ENCODE measurements at regions of chr3 and their contacts with region 1.

Region 1: DNA sequence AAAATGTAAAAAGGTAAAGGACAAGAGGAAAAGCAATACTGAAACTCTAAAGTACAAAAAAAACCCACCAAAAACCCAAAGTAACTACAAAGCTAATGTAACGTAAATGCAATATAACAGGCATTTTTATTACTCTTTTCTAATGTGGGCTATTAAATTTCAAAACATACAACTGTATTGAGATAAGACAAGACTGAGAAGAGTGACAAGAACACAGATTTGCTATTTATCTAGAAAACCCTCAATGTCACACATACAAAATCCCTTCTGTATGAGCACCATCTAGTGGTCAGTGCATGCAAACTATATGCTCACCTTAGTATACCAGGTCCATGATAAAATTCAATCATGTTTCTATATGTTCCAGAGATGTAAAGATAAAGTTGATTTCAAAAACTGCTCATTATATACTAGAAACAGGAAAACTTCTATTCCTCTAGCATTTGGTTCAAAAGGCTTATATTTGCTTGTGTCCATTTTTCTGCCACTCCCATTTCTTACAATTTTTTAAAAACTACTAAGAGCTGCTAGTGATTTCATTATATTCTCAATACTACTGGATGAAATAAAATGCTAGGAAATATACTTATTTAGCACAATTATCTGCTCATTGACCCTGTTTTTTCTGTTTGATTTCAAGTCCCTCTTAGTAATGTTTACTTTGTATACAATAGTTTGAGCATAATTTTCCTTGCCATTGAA is 111.4 kb downstream of the DLG1 start:
- DNase-seq: peak in 2 of 10 donors; percentile 19 to 40
- H3K4me3 ChIP-seq: no peak overlapping the region
- H3K27ac ChIP-seq: peak overlapping the region in 19 of 59 donors; percentile 0 to 81 (median 25)
- H3K27me3 ChIP-seq: no peaks in the 10 kb centered on the region
- CTCF ChIP-seq: peak; percentile 70 to 97 (median 90)

Region 2: DNA sequence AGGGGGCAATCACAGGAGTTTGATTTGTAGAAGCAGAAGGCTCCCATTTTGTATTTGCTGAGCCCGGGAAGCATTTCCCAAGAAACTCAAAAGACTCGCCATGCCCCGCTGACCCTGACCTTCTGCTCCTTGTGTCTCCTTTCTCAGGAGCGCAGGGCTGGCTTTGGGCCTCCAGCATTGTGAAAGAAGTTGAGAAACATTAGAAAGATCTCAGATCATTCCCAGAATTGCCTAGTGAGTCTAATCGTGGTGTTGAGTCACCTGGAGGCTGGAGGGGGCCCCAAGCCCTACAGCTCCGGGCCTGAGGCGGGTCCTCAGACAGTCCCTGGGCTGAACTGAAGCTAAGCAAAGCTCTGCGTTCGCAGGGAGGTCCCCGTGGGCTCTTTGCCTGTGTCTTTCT is 207.5 kb before region 1 on chr3:
- intact Hi-C with region 1: loop called in 1 of 2 experiments (anchors 5 kb)
- DNase-seq: no peak
- H3K4me3 ChIP-seq: no peak overlapping the region
- H3K27ac ChIP-seq: no peak overlapping the region
- H3K27me3 ChIP-seq: no peaks in the 10 kb centered on the region
- CTCF ChIP-seq: no peak

Region 3: DNA sequence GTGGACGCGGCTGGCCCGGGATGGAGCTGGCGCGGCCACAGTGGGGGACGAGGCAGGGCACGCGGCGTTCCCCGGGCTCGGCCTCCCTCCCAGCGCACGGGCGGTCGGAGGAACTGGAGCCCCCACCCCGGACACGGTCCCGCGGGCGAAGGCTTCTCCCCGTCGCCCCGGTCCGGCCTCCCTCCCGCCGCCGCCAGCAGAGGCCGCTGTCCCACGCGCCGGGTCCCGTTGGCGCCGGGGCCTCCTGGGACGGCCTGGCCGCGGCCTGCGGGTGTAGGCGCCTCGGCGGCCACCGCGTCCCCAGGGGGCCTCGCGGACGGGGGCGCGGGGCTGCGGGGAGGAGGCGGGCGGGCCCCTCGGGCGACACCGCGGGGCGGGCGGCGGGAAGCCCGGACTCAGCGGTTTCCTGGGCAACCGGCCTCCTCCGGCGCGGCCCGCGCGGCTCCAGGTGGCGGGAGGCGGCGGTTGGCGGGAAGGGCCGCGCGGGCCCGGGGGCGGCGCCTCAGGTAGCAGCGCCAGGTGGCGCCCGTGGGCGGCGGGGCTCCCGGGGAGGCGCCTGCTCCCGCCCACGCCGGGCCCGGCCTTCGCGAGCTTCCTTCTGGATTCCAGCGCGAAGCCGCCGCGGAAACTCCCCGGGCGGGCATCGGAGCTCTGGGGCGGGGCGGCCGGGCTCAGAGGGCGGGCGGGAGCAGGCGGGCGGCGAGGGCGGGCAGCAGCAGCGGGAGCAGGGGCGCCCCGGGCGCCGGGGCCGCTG is 184.2 kb before region 1 on chr3:
- intact Hi-C with region 1: loop called (anchors 2 to 5 kb)
- DNase-seq: peak in 8 of 10 donors; percentile 44 to 87 (median 69)
- H3K4me3 ChIP-seq: peak overlapping the region; percentile 39 to 87 (median 68)
- H3K27ac ChIP-seq: peak overlapping the region in 58 of 59 donors; percentile 45 to 93 (median 84)
- H3K27me3 ChIP-seq: no peaks in the 10 kb centered on the region
- CTCF ChIP-seq: peak; percentile 33 to 89 (median 69)

Region 4: DNA sequence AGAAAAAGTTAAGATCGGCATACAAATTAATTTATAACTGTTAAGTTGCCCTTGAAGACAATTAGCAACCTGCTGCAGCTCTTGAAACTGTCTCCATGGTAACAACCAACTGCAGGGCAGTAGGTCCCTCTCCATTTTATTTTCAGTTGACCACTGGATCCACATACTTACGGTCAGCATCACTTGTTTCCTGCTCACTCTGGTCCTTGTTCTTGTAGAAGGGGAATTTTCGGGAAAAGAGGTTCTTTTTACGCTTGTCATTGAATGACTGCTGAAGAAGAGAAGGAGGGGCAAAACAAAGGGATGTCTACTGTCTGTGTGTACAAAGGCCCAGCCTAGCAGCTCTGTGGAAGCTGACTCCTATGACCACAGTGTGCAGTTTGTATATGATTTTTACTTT is 110.6 kb before region 1 on chr3:
- intact Hi-C with region 1: loop called in 1 of 2 experiments (anchors 10 kb)
- DNase-seq: no peak
- H3K4me3 ChIP-seq: no peak overlapping the region
- H3K27ac ChIP-seq: peak overlapping the region in 19 of 59 donors; percentile 2 to 62 (median 25)
- H3K27me3 ChIP-seq: no peaks in the 10 kb centered on the region
- CTCF ChIP-seq: no peak

Region 5: GRCh38 chr3:197835509-197835908 is 648.5 kb after region 1 on chr3:
- intact Hi-C with region 1: no loop called
- DNase-seq: no peak
- H3K4me3 ChIP-seq: no peak overlapping the region
- H3K27ac ChIP-seq: peak overlapping the region in 4 of 59 donors; percentile 13 to 57 (median 30)
- H3K27me3 ChIP-seq: no peaks in the 10 kb centered on the region
- CTCF ChIP-seq: no peak